Sigmoid colon (tissue), 7 donors: ENCODE measurements at regions of chr3 and their contacts with region 1.

Region 1: DNA sequence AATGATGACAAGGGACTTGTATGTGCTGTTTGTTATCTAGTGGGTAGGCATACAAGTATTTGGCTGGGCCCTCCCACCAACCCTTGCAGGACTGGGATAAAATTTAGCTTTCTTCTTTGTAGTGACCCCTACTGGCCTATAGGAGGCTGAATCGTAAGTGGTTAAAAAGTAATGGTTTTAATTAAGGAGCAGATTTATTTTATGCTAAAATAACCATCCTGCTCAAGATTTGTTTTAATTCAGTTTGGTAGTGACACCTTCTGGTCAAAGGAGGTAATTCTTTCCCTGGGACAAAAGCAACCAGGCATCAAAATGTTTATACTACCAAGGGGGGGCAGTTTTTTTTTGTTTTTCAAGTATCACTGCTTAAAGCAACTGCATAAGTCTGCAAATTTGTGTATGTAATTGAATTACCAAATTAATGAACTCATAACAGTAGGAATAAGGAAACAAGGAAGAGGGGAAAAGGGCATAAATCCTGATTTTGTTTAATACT is 70.7 kb downstream of the TOP2B start:
- DNase-seq: no peak
- H3K4me3 ChIP-seq: no peak overlapping the region
- H3K27ac ChIP-seq: peak overlapping the region; percentile 8 to 55 (median 23)
- H3K4me1 ChIP-seq: peaks cover 0 to 38% (median 23%) of the 10 kb centered on the region in 4 donors
- H3K27me3 ChIP-seq: no peaks in the 10 kb centered on the region
- CTCF ChIP-seq: peak; percentile 67 to 78 (median 76)
- EP300 ChIP-seq: no peak
- POLR2A ChIP-seq: no peak

Region 2: GRCh38 chr3:24773798-24774197 is 820.3 kb before region 1 on chr3:
- intact Hi-C with region 1: loop called (anchors 2 kb)
- DNase-seq: peak; percentile 73
- H3K4me3 ChIP-seq: no peak overlapping the region
- H3K27ac ChIP-seq: no peak overlapping the region
- H3K4me1 ChIP-seq: peaks cover 0 to 7% (median 0%) of the 10 kb centered on the region in 4 donors
- H3K27me3 ChIP-seq: no peaks in the 10 kb centered on the region
- CTCF ChIP-seq: peak; percentile 64 to 80 (median 70)
- EP300 ChIP-seq: no peak
- POLR2A ChIP-seq: no peak

Region 3: DNA sequence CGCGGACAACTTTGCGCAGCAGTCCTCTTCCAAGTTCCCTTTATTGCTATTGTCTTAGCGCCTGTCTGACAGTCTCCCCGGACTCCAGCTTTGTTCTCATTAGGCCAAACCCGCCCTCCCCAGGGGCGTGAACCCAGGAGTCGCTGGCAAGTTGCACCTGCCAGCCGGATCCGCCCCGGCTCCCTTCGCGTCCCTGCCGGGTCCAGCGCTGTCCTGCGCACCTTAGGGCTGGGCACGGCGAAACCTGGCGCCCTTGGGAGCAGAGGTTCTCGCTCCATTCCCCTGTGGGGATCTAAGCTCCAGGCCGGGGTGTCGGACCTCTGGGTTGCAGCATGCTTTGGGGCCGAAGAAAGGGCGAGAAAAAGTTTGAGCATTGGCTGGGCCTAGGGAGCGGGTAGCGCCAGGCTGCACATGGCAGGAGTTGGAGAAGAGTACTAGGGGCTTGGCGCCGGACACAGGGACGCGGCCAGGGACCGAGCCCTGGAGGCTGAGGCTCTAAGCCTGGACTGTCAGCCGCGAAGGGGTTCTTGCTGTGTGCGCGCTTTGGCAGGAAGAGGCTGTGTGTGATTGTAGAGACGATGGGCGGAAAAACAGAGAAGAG is 764.3 kb before region 1 on chr3:
- intact Hi-C with region 1: loop called (anchors 10 kb)
- DNase-seq: no peak
- H3K4me3 ChIP-seq: peak overlapping the region; percentile 39 to 62 (median 58)
- H3K27ac ChIP-seq: peak overlapping the region in 2 of 4 donors; percentile 34 to 66
- H3K4me1 ChIP-seq: peaks cover 0 to 23% (median 21%) of the 10 kb centered on the region in 4 donors
- H3K27me3 ChIP-seq: no peaks in the 10 kb centered on the region
- CTCF ChIP-seq: no peak
- EP300 ChIP-seq: no peak
- POLR2A ChIP-seq: no peak

Region 4: GRCh38 chr3:24963762-24964625 is 630.1 kb before region 1 on chr3:
- intact Hi-C with region 1: loop called (anchors 2 kb)
- DNase-seq: no peak
- H3K4me3 ChIP-seq: no peak overlapping the region
- H3K27ac ChIP-seq: no peak overlapping the region
- H3K4me1 ChIP-seq: no peaks in the 10 kb centered on the region
- H3K27me3 ChIP-seq: no peaks in the 10 kb centered on the region
- CTCF ChIP-seq: peak; percentile 28 to 50 (median 43)
- EP300 ChIP-seq: no peak
- POLR2A ChIP-seq: no peak

Region 5: GRCh38 chr3:25033407-25034029 is 560.5 kb before region 1 on chr3:
- intact Hi-C with region 1: loop called (anchors 5 kb)
- DNase-seq: no peak
- H3K4me3 ChIP-seq: no peak overlapping the region
- H3K27ac ChIP-seq: no peak overlapping the region
- H3K4me1 ChIP-seq: peaks cover 0 to 36% (median 22%) of the 10 kb centered on the region in 4 donors
- H3K27me3 ChIP-seq: no peaks in the 10 kb centered on the region
- CTCF ChIP-seq: peak in 2 of 4 experiments; percentile 7 to 34
- EP300 ChIP-seq: no peak
- POLR2A ChIP-seq: no peak

Region 6: DNA sequence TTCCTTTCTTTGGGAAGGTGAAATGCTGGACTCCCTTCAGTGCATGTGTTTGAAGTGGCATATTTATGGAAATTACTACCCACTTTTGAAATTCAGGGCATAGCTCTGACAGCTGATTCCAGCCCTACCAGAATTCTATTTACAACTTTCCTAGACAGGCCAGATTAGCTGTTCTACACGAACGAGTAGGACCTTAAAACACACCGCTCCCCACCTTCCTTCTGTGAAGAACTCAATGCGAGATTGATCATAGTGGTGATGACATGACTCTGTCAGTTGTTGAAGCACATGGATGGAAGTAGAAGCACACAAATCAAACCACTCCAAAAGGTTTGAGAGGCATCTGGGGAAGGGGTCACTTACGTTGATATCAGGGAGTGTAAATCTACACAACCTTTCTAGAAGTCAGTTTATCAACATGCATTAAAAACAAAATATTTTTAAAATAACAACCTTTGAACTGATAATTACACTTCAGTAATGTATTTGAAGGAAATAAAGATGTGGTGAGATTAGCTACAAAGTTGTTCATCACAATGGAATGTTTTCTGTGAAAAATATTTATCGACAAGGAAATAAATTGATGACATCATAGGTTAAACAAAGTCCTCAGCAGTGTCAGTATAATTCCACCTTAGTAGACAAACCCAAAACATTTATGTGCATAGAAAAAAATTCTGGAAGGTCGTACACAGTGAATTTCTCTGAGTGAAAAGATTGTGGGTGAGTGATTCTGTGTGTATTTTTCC is 136.2 kb before region 1 on chr3:
- intact Hi-C with region 1: no loop called
- DNase-seq: no peak
- H3K4me3 ChIP-seq: no peak overlapping the region
- H3K27ac ChIP-seq: peak overlapping the region; percentile 10 to 79 (median 57)
- H3K4me1 ChIP-seq: peaks cover 0 to 59% (median 46%) of the 10 kb centered on the region in 4 donors
- H3K27me3 ChIP-seq: no peaks in the 10 kb centered on the region
- CTCF ChIP-seq: no peak
- EP300 ChIP-seq: no peak
- POLR2A ChIP-seq: no peak

Region 7: DNA sequence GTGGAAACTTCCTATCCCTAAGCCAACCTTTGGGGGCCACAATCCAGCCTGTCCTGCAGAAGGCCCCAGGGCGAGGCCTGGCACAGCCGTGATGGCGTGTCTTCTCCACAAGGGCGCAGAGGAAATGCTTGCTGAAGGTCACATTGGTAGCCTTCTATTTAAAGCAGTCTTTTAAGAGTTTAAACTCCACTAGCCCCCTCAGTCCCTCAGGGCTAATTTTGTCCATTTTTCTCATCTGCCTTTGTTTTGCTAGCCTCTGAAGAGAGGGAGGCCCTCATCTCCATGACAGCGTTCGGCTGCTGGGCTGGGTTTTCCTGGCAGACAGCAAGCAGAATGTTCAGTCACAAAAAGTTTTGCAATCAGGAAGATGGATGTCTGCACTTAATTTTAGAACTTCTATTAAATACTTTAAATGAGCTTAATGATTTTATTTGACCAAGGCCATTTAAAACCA is 125.2 kb before region 1 on chr3:
- intact Hi-C with region 1: loop called (anchors 5 kb)
- DNase-seq: peak; percentile 89
- H3K4me3 ChIP-seq: no peak overlapping the region
- H3K27ac ChIP-seq: peak overlapping the region in 3 of 4 donors; percentile 49 to 72 (median 71)
- H3K4me1 ChIP-seq: peaks cover 0 to 63% (median 57%) of the 10 kb centered on the region in 4 donors
- H3K27me3 ChIP-seq: no peaks in the 10 kb centered on the region
- CTCF ChIP-seq: peak in 1 of 4 experiments; percentile 35
- EP300 ChIP-seq: peak in 1 of 4 donors; percentile 28
- POLR2A ChIP-seq: no peak

Region 8: GRCh38 chr3:26104851-26105251 is 510.8 kb after region 1 on chr3:
- intact Hi-C with region 1: no loop called
- DNase-seq: no peak
- H3K4me3 ChIP-seq: no peak overlapping the region
- H3K27ac ChIP-seq: peak overlapping the region; percentile 29 to 65 (median 46)
- H3K4me1 ChIP-seq: peaks cover 0 to 27% (median 11%) of the 10 kb centered on the region in 4 donors
- H3K27me3 ChIP-seq: no peaks in the 10 kb centered on the region
- CTCF ChIP-seq: no peak
- EP300 ChIP-seq: no peak
- POLR2A ChIP-seq: no peak